ENCODE measurements at regions of chr4 and their contacts with region 1.

Region 1: GRCh38 chr4:98467627-98468072 is 190.8 kb downstream of the TSPAN5 start:
- DNase-seq: peak; percentile 63
- H3K4me3 Mint-ChIP-seq: peak overlapping the region; percentile 69
- H3K27ac Mint-ChIP-seq: peak overlapping the region; percentile 29
- H3K4me1 Mint-ChIP-seq: peaks cover 54% of the 10 kb centered on the region
- H3K27me3 Mint-ChIP-seq: no peaks in the 10 kb centered on the region

Region 2: GRCh38 chr4:98203332-98204235 is 264.1 kb before region 1 on chr4:
- intact Hi-C with region 1: no loop called
- DNase-seq: no peak
- H3K4me3 Mint-ChIP-seq: no peak overlapping the region
- H3K27ac Mint-ChIP-seq: no peak overlapping the region
- H3K4me1 Mint-ChIP-seq: peaks cover 9% of the 10 kb centered on the region
- H3K27me3 Mint-ChIP-seq: no peaks in the 10 kb centered on the region

Region 3: GRCh38 chr4:98275145-98275544 is 192.5 kb before region 1 on chr4:
- intact Hi-C with region 1: no loop called
- DNase-seq: no peak
- H3K4me3 Mint-ChIP-seq: no peak overlapping the region
- H3K27ac Mint-ChIP-seq: no peak overlapping the region
- H3K4me1 Mint-ChIP-seq: peaks cover 20% of the 10 kb centered on the region
- H3K27me3 Mint-ChIP-seq: no peaks in the 10 kb centered on the region

Region 4: GRCh38 chr4:98433691-98434090 is 34.0 kb before region 1 on chr4:
- intact Hi-C with region 1: no loop called
- DNase-seq: no peak
- H3K4me3 Mint-ChIP-seq: no peak overlapping the region
- H3K27ac Mint-ChIP-seq: no peak overlapping the region
- H3K4me1 Mint-ChIP-seq: peaks cover 10% of the 10 kb centered on the region
- H3K27me3 Mint-ChIP-seq: no peaks in the 10 kb centered on the region

Region 5: GRCh38 chr4:98446499-98447375 is 20.9 kb before region 1 on chr4:
- intact Hi-C with region 1: loop called (anchors 2 kb)
- DNase-seq: peak; percentile 44
- H3K4me3 Mint-ChIP-seq: peak overlapping the region; percentile 67
- H3K27ac Mint-ChIP-seq: peak overlapping the region; percentile 90
- H3K4me1 Mint-ChIP-seq: peaks cover 43% of the 10 kb centered on the region
- H3K27me3 Mint-ChIP-seq: peaks cover 3% of the 10 kb centered on the region

Region 6: DNA sequence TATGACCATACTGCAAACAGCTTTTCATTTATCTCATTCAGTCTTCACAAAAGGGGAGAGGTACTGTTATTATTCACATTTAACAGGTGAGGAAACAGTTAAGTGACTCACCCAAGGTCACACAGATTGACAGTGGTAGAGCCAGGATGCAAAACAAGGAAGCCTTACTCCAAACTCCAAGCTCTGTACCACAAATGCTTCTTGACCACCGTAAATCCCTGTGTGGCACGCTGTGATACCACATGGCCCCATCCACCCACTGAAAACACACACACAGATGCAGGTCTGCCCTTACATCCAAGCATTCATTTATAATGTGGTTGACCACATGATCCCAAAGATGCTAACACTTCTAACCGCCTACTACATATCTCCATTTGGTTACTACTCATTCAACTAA is 61.2 kb after region 1 on chr4:
- intact Hi-C with region 1: loop called (anchors 2 kb)
- DNase-seq: no peak
- H3K4me3 Mint-ChIP-seq: peak overlapping the region; percentile 9
- H3K27ac Mint-ChIP-seq: peak overlapping the region; percentile 64
- H3K4me1 Mint-ChIP-seq: peaks cover 54% of the 10 kb centered on the region
- H3K27me3 Mint-ChIP-seq: no peaks in the 10 kb centered on the region

Region 7: DNA sequence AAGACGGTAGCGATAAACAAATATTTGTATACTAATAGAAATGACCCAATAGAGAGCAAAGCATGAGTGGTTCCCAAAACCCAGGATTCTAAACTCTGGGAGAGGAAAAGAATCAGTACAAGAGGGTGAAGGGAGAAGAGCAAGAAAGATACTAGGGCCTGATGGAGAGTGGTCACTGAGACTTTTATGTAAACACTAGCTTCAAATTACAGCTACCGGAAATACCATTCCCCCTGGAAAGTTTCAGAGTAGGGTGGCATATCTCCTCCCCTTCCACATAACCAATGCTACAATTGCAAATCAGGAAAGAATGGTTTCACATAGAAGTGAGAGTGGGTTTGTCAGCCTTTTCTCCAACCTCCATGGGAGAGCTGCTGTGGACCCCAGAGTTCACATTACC is 384.2 kb after region 1 on chr4:
- intact Hi-C with region 1: loop called (anchors 10 kb)
- DNase-seq: no peak
- H3K4me3 Mint-ChIP-seq: no peak overlapping the region
- H3K27ac Mint-ChIP-seq: no peak overlapping the region
- H3K4me1 Mint-ChIP-seq: no peaks in the 10 kb centered on the region
- H3K27me3 Mint-ChIP-seq: peaks cover 11% of the 10 kb centered on the region

Region 8: DNA sequence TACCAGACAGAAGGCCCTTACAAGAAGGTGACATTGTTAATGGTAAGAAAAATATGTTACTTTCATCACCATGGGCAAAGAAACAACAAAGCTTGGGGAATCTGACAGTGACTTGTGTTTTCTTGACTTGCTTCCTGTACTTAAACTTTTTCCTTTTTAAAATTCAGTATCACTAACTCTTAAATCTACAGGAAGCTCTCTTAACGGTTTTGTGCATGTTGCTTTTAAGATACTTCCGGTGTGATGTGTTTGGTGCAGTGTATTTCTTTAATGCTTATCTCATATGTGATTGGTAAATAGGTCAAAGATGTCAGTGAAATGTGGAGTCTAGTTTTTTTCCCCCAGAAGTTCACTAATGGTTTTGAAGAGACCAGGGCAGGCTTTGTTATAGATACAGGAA is 575.7 kb after region 1 on chr4:
- intact Hi-C with region 1: no loop called
- DNase-seq: no peak
- H3K4me3 Mint-ChIP-seq: peak overlapping the region; percentile 43
- H3K27ac Mint-ChIP-seq: peak overlapping the region; percentile 80
- H3K4me1 Mint-ChIP-seq: peaks cover 19% of the 10 kb centered on the region
- H3K27me3 Mint-ChIP-seq: no peaks in the 10 kb centered on the region

Region 9: GRCh38 chr4:99405433-99406115 is 937.9 kb after region 1 on chr4:
- intact Hi-C with region 1: loop called (anchors 10 kb)
- DNase-seq: peak; percentile 25
- H3K4me3 Mint-ChIP-seq: no peak overlapping the region
- H3K27ac Mint-ChIP-seq: no peak overlapping the region
- H3K4me1 Mint-ChIP-seq: peaks cover 19% of the 10 kb centered on the region
- H3K27me3 Mint-ChIP-seq: peaks cover 11% of the 10 kb centered on the region

Measured in activated T-helper 1 cell treated with anti-CD3 and anti-CD28 coated beads, Interleukin-12 subunit alpha, Interleukin-12 subunit beta, Interleukin-2, Interleukin-4 antibody, amounts not matched to agents 30 ng/mL and 10 ng/mL and 1 ng/mL, durations not matched to agents 14 hours and 24 hours and 36 hours (primary cell).